ENCODE measurements at regions of chr1 and their contacts with region 1.

Region 1: DNA sequence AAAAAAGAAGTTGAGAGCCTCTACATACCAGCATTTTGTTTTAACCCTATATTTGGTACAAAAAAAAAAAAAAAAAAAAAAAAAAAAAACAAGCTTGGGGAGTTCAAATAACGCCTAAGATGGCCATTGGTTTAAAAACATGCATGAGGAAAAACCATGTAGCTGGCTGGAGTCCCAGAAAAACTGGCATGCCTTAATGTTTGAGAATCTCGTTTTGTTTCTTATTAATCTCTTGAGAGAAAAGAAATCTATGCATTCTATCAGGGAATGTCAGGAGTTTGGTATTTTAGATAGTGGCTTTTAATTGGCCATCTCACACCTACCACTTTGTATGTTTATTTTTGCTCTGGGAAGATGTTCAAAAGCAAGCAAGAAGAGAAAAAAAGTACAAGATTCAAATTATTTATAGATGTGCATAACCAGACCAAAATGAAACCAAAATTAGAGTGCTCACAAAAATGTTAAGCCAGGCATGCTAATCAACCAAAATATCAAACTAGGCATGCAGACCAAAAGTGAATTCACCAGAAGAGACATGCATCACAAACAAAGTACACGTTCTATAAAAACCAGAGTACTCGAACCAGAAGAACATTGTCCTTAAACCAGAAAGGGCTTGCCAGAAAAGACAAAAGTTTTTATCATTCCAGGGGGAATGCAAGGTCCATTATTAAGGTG is 156.6 kb downstream of the AK5 start:
- DNase-seq: peak in 1 of 5 donors; percentile 11
- H3K4me3 ChIP-seq: no peak overlapping the region
- H3K27ac ChIP-seq: no peak overlapping the region
- H3K4me1 ChIP-seq: no peaks in the 10 kb centered on the region
- H3K27me3 ChIP-seq: no peaks in the 10 kb centered on the region
- CTCF ChIP-seq: no peak
- EP300 ChIP-seq: no peak
- POLR2A ChIP-seq: no peak

Region 2: DNA sequence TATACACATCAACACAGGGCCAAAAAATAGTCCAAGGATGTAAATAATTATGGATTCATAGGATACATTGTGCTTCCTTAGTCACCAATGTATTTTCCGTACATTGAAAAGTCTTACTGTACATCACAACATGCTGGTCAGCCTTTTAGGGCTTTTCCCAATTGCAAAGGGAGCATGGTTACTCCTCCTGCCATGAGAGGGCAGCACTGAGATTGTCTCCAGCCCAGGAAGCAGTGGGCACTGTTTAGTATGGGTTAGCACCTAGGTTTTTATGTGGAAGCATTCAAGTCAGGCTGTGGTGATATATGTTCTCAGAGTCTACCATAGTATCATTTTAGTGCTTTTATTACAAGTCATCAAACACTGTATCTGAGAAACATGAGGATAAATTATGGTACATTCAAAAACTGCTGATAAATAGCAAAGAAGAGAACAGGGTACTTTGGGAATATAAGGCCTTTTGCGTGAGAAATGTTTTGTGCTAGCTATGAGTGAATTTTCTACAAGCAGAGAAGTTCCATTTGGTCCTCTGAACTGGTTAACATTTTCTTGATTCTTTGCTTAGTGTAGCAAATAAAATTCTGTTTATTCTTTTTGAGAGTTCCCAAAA is 537.1 kb before region 1 on chr1:
- intact Hi-C with region 1: no loop called
- DNase-seq: peak; percentile 37 to 63 (median 44)
- H3K4me3 ChIP-seq: no peak overlapping the region
- H3K27ac ChIP-seq: no peak overlapping the region
- H3K4me1 ChIP-seq: no peaks in the 10 kb centered on the region
- H3K27me3 ChIP-seq: no peaks in the 10 kb centered on the region
- CTCF ChIP-seq: peak in 2 of 3 donors; percentile 49 to 51
- EP300 ChIP-seq: no peak
- POLR2A ChIP-seq: no peak

Region 3: GRCh38 chr1:77382366-77382765 is 56.0 kb before region 1 on chr1:
- intact Hi-C with region 1: no loop called
- DNase-seq: no peak
- H3K4me3 ChIP-seq: no peak overlapping the region
- H3K27ac ChIP-seq: no peak overlapping the region
- H3K4me1 ChIP-seq: no peaks in the 10 kb centered on the region
- H3K27me3 ChIP-seq: no peaks in the 10 kb centered on the region
- CTCF ChIP-seq: no peak
- EP300 ChIP-seq: no peak
- POLR2A ChIP-seq: no peak

Region 4: DNA sequence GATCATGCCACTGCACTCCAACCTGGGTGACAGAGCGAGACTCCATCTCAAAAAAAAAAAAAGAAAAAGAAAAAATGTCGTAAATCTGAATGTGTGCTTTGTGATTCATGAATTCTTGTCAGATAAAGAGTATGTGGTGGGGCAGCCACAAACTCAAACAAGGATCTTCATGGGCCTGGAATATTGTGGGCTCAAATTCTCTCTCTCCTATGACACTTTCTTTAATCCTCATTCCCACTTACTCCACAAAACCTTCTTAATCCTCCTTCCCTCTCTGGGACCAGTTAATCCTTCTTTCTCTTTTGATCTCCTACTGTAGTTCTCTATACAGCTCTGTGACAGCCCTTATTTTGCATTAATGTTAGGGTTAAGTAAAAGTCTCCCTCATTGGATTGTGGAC is 44.2 kb before region 1 on chr1:
- intact Hi-C with region 1: no loop called
- DNase-seq: no peak
- H3K4me3 ChIP-seq: no peak overlapping the region
- H3K27ac ChIP-seq: no peak overlapping the region
- H3K4me1 ChIP-seq: no peaks in the 10 kb centered on the region
- H3K27me3 ChIP-seq: no peaks in the 10 kb centered on the region
- CTCF ChIP-seq: no peak
- EP300 ChIP-seq: no peak
- POLR2A ChIP-seq: no peak

Region 5: DNA sequence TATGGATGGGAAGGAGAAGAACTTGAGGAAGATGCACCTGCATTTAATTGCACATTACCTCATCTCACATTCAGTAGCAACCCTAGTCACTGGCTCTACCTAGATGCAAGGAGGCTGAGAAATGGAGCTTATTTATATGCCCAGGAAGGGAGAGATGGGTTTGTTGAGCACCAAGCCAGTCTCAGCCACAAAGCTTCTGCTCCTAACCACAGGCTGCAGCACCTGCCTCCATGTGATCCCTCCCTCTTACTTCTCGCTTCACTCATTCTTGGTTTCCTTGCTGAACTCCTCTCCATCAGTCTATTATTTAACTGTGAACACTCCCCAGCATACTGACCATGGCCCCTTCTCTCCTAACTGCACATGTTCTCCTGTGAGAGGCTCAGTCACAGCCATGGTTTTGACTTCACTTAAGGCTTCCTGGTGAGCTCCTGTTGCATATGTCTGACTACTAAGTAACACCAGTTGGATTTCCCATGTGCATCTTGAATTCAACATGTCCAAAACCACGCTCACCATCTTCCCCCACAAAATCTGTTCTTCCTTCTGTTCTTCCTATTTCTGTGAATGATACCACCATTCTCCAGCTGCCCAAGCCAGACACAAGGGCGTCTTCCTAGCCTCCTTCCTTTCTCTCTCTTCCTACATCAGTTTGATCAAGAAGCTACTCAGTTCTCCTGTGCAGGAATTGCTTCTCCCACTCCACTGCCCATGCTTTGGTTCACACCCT is 16.7 kb before region 1 on chr1:
- intact Hi-C with region 1: loop called in 1 of 4 experiments (anchors 1 kb)
- DNase-seq: no peak
- H3K4me3 ChIP-seq: no peak overlapping the region
- H3K27ac ChIP-seq: no peak overlapping the region
- H3K4me1 ChIP-seq: no peaks in the 10 kb centered on the region
- H3K27me3 ChIP-seq: no peaks in the 10 kb centered on the region
- CTCF ChIP-seq: no peak
- EP300 ChIP-seq: no peak
- POLR2A ChIP-seq: no peak